ENCODE measurements at regions of chr10 and their contacts with region 1.

Region 1: DNA sequence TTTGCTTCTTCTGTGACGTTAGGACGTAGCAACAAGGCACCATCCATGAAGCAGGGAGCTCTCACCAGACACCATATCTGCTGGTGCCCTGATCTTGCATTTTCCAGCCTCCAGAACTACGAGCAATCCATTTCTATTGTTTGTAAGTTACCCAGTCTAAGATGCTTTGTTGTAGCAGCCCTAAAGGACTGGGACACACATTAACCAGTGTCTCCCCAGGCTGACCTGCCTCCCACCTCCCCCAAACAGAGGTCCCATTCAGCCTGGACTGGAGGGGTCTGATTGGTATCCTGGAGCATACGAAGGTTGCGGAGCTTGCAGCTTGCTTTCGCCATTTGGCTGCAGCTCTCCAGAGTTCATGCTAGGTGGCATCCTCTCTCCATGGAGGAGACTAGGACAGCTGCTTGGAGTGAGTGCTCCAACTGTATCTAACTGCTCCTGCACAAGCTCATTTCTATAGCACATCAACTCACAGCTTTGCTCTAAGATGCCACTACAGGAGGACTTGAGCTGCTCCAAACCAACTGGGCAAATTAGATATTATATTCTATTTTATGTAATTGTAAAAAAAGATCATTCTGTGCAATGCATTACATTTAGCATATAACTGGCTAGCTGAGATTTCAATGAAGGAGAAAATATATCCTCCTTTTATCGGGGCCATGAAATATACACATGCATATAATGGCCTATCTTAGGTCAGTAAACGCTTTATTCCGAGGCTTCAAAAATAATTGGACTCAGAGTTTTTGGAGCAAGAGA is 8.0 kb upstream of the GRK5 start:
- DNase-seq: peak; percentile 68 to 87
- ATAC-seq: peak; percentile 96 to 98
- H3K4me3 ChIP-seq: no peak overlapping the region
- H3K27ac ChIP-seq: no peak overlapping the region
- H3K4me1 ChIP-seq: no peaks in the 10 kb centered on the region; the same call in 2 of the 3 replicates
- CTCF ChIP-seq: peak; percentile 89
- EP300 ChIP-seq: no peak
- POLR2A ChIP-seq: no peak
- RAD21 ChIP-seq: peak; percentile 95 to 98

Region 2: GRCh38 chr10:119176166-119176565 is 23.2 kb before region 1 on chr10:
- CTCF ChIA-PET with region 1: interaction called, 11 read pairs
- POLR2A ChIA-PET with region 1: no interaction called
- DNase-seq: no peak
- ATAC-seq: no peak
- H3K4me3 ChIP-seq: no peak overlapping the region
- H3K27ac ChIP-seq: no peak overlapping the region
- H3K4me1 ChIP-seq: peaks cover 27% of the 10 kb centered on the region; the same call in 2 of the 3 replicates
- CTCF ChIP-seq: no peak
- EP300 ChIP-seq: no peak
- POLR2A ChIP-seq: no peak
- RAD21 ChIP-seq: no peak

Region 3: GRCh38 chr10:119421887-119422681 is 222.7 kb after region 1 on chr10:
- CTCF ChIA-PET with region 1: interaction called, 283 read pairs
- POLR2A ChIA-PET with region 1: no interaction called
- DNase-seq: no peak
- ATAC-seq: no peak
- H3K4me3 ChIP-seq: no peak overlapping the region
- H3K27ac ChIP-seq: no peak overlapping the region
- H3K4me1 ChIP-seq: no peaks in the 10 kb centered on the region
- CTCF ChIP-seq: no peak
- EP300 ChIP-seq: no peak
- POLR2A ChIP-seq: no peak
- RAD21 ChIP-seq: no peak

Region 4: GRCh38 chr10:119439922-119440321 is 240.5 kb after region 1 on chr10:
- CTCF ChIA-PET with region 1: interaction called, 186 read pairs
- POLR2A ChIA-PET with region 1: interaction called, 3 read pairs
- DNase-seq: no peak
- ATAC-seq: no peak
- H3K4me3 ChIP-seq: no peak overlapping the region
- H3K27ac ChIP-seq: no peak overlapping the region; a peak in 1 of 6 replicates
- H3K4me1 ChIP-seq: no peaks in the 10 kb centered on the region
- CTCF ChIP-seq: no peak
- EP300 ChIP-seq: no peak
- POLR2A ChIP-seq: no peak
- RAD21 ChIP-seq: no peak

Region 5: DNA sequence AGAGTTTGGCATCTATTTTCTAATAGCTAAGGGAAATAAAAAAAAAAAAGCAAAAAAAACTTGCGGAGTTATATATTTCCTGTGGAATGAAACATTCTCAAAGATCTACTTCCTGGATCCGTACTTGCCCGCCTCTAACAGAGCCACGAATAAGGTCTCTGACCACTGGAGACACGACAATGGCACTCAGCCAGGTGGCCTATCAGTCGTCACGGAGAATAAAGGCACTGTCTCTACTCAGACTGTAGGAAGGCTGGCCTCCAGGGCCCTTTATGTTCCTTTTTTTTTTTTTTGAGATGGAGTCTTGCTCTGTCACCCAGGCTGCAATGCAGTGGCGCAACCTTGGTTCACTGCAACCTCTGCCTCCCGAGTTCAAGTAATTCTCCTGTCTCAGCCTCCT is 284.4 kb after region 1 on chr10:
- CTCF ChIA-PET with region 1: interaction called, 107 read pairs
- POLR2A ChIA-PET with region 1: no interaction called
- DNase-seq: no peak
- ATAC-seq: no peak
- H3K4me3 ChIP-seq: no peak overlapping the region
- H3K27ac ChIP-seq: no peak overlapping the region
- H3K4me1 ChIP-seq: peaks cover 10% of the 10 kb centered on the region
- CTCF ChIP-seq: no peak
- EP300 ChIP-seq: no peak
- POLR2A ChIP-seq: no peak
- RAD21 ChIP-seq: no peak

Region 6: DNA sequence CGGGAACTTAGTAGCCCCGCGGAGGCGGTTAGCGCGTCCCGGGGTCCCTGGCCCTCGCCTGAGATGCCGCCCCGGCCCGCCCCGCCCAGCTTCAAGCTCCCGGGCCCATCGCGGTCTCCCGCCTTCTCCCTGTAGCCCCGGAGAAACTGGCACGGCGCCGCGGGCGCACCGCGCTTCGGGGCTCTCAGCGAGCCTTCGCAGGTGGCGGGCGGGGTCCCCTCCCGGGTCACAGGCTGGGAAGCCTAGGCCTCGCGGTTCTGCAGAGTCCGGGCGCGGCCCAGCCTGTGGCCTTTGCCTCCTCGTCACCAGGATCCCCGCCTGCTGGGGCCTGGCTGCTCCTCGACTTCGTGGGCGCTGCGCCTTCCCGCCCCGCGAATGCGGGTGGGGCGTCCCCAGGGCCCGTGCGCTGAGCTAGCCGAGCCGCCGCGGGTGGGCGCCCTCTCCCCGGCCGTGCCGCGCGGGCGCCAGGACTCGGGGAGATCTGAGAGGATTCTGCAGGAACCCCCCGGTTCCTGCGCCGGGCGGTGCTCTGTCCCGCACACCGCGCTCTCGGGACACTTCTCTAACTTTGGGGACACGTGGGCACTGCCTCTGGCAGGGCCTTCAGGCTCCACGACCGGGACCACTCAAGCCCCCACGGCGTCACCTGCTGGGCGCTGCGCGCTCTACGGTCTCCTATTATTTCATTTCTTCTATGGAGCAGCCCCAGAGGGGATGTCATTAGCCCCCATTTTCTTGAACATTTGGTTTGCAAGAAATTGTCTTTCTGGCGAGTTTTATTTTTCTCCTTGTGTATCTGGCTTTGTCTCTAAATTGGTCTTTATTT is 343.8 kb after region 1 on chr10:
- CTCF ChIA-PET with region 1: interaction called, 49 read pairs
- POLR2A ChIA-PET with region 1: interaction called, 4 read pairs
- DNase-seq: peak; percentile 69 to 75
- ATAC-seq: peak; percentile 78 to 80
- H3K4me3 ChIP-seq: peak overlapping the region; percentile 78
- H3K27ac ChIP-seq: peak overlapping the region; percentile 95 to 98
- H3K4me1 ChIP-seq: peaks cover 20% of the 10 kb centered on the region
- CTCF ChIP-seq: peak; percentile 95
- EP300 ChIP-seq: no peak
- POLR2A ChIP-seq: peak; percentile 29; the same call in 1 of the 2 replicates
- RAD21 ChIP-seq: peak; percentile 41 to 61

Region 7: GRCh38 chr10:119896937-119897770 is 697.7 kb after region 1 on chr10:
- CTCF ChIA-PET with region 1: no interaction called
- POLR2A ChIA-PET with region 1: no interaction called
- DNase-seq: peak in 1 of 2 experiments; percentile 36
- ATAC-seq: no peak
- H3K4me3 ChIP-seq: no peak overlapping the region
- H3K27ac ChIP-seq: no peak overlapping the region
- H3K4me1 ChIP-seq: peaks cover 35% of the 10 kb centered on the region
- CTCF ChIP-seq: no peak
- EP300 ChIP-seq: no peak
- POLR2A ChIP-seq: no peak
- RAD21 ChIP-seq: no peak